ENCODE measurements at regions of chr4 and their contacts with region 1.

Region 1: DNA sequence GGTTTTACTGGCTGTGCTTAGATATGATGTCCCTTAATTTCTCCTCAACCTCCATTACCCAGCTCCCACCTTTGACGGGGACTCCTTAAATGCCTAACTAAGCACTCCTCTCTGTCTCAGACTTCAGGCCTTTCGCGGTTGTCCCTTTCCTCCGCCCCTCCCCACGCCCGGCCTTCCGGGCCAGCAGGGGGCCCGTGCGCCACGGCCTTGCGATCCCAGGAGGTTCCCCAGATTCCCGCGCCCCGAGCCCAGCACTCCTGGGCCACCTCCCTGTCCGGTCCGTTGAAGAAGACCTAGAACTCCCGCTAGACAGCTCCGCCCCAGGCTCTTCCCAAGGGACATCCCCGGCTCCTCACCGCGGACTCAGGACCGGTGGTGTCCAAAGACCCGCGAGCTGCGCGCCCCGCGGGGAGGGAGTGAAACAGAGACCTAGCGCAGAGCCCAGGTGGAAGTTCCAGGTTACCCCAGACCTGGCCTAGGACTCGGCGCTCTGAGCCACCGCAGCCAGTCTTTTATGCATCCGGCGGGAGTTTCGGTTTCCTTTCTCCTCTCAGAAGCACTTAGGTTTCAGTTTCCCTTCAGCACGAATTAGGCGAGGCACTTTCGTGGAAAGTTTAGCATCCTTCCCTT is at the start of gene DDX60:
- DNase-seq: peak; percentile 47 to 70
- H3K4me3 ChIP-seq: peak within 1 kb of the TSS; percentile 95
- H3K27ac ChIP-seq: peak within 1 kb of the TSS; percentile 73
- H3K4me1 ChIP-seq: peaks cover 11% of the 10 kb centered on the region; the same call in 1 of the 2 replicates
- H3K27me3 ChIP-seq: no peaks in the 10 kb centered on the region
- CTCF ChIP-seq: no peak
- total RNA-seq, gene DDX60: 9.1 and 12.2 TPM in 2 replicates

Region 2: GRCh38 chr4:168218645-168219044 is 99.7 kb before region 1 on chr4:
- CTCF ChIA-PET with region 1: no interaction called
- POLR2A ChIA-PET with region 1: no interaction called
- intact Hi-C with region 1: loop called (anchors 1 kb)
- DNase-seq: peak in 1 of 2 experiments; percentile 84
- H3K4me3 ChIP-seq: no peak overlapping the region
- H3K27ac ChIP-seq: no peak overlapping the region
- H3K4me1 ChIP-seq: peaks cover 4% of the 10 kb centered on the region
- H3K27me3 ChIP-seq: no peaks in the 10 kb centered on the region
- CTCF ChIP-seq: no peak

Region 3: GRCh38 chr4:168335621-168336020 is 17.2 kb after region 1 on chr4:
- CTCF ChIA-PET with region 1: no interaction called
- POLR2A ChIA-PET with region 1: no interaction called
- intact Hi-C with region 1: no loop called
- DNase-seq: no peak
- H3K4me3 ChIP-seq: no peak overlapping the region
- H3K27ac ChIP-seq: no peak overlapping the region
- H3K4me1 ChIP-seq: no peaks in the 10 kb centered on the region
- H3K27me3 ChIP-seq: no peaks in the 10 kb centered on the region
- CTCF ChIP-seq: no peak

Region 4: GRCh38 chr4:169254546-169254983 is 936.2 kb after region 1 on chr4:
- CTCF ChIA-PET with region 1: no interaction called
- POLR2A ChIA-PET with region 1: no interaction called
- intact Hi-C with region 1: no loop called
- DNase-seq: no peak
- H3K4me3 ChIP-seq: no peak overlapping the region
- H3K27ac ChIP-seq: no peak overlapping the region
- H3K4me1 ChIP-seq: peaks cover 52% of the 10 kb centered on the region
- H3K27me3 ChIP-seq: no peaks in the 10 kb centered on the region
- CTCF ChIP-seq: no peak

Measured in PC-9 (cell line).